ENCODE measurements at regions of chr10 and their contacts with region 1.

Region 1: DNA sequence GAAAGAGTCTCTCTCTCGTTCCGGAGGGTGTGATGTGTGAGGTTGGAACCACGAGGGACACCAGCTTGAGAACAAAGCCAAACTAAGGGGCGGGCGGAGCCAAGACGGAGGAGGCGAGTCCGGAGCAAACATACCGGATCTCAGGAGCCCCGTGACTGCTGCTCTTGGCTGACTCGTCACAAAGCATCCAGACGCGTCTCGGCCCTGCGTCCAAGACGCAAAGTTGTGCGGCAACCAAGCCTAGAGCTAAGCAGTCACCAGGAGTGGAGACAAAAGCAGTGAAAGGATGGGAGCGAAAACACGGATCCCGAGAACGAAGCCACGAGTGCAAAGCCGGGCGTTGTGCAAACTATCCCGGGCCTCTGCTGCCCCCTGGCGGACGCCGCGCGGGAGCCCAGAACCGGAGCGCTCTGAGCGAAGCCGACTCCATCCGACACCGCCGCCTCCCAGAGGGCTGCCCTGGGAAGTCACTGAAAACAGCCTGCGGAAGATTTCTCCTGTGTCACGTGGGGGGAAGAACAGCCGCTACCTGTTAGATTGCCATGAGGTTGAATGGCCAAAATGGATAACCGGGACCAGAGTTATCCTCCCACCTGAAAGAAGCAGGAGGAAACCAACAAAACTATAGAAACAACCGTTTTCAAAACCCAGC is 46.4 kb upstream of the TMEM72 start:
- DNase-seq: peak; percentile 70 to 79 (median 75)
- H3K4me3 ChIP-seq: peak overlapping the region; percentile 43 to 72
- H3K4me3 Mint-ChIP-seq: peak overlapping the region; percentile 88 to 94 (median 91)
- H3K27ac ChIP-seq: no peak overlapping the region
- H3K27ac Mint-ChIP-seq: peak overlapping the region in 1 of 7 donors; percentile 38
- H3K4me1 ChIP-seq: peaks cover 14% of the 10 kb centered on the region
- H3K4me1 Mint-ChIP-seq: peaks cover 5 to 18% (median 9%) of the 10 kb centered on the region in 4 donors
- H3K27me3 ChIP-seq: peaks cover 9% of the 10 kb centered on the region
- H3K27me3 Mint-ChIP-seq: peaks cover 32 to 37% of the 10 kb centered on the region in 2 donors

Region 2: DNA sequence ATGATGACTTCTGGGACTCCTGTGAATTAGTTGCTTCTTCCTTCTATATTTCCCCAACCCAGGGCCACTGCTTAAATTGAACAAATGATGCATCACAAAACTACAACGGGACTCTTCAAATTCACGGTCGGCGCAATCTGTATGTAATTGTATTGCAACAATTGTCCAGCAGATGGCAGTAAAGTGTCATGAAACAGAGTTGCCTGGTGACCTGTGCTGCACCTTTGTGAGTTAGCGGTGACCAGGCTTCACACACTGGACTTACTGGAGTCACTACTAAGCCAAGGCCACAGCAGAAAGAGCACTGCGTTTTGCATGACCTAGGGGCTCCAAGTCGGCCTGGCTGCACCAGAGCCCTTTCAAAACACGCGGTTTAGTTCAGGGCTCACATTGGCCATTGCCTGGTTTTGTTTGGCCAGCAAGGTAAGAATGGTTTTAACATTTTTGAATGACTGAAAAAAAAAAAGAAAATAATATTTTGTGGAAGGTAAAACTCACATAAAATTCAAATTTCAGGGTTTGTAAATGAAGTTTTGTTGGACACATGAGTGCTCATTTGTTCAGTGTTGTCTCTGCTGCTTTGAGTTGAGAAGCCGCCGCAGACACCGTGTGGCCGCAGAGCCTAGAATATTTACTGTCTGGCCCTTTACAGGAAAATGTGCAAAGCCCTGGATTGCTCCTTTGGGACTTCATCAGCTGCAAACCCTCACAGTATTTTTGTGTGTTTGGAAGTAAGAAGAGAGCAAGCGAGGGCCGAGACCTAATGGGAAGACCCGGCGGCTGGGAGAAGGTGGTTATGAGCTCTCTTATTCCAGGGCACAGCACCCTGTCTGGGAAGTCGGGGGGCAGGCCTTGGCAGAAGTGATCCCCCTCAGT is 1192.9 kb before region 1 on chr10:
- CTCF ChIA-PET with region 1: interaction called, 27 read pairs
- POLR2A ChIA-PET with region 1: no interaction called
- intact Hi-C with region 1: loop called (anchors 1 kb)
- DNase-seq: peak in 4 of 5 donors; percentile 49 to 65 (median 54)
- H3K4me3 ChIP-seq: no peak overlapping the region
- H3K4me3 Mint-ChIP-seq: no peak overlapping the region
- H3K27ac ChIP-seq: no peak overlapping the region
- H3K27ac Mint-ChIP-seq: no peak overlapping the region
- H3K4me1 ChIP-seq: no peaks in the 10 kb centered on the region
- H3K4me1 Mint-ChIP-seq: peaks cover 0 to 7% (median 2%) of the 10 kb centered on the region in 4 donors
- H3K27me3 ChIP-seq: peaks cover 10% of the 10 kb centered on the region
- H3K27me3 Mint-ChIP-seq: peaks cover 27 to 32% of the 10 kb centered on the region in 2 donors

Region 3: DNA sequence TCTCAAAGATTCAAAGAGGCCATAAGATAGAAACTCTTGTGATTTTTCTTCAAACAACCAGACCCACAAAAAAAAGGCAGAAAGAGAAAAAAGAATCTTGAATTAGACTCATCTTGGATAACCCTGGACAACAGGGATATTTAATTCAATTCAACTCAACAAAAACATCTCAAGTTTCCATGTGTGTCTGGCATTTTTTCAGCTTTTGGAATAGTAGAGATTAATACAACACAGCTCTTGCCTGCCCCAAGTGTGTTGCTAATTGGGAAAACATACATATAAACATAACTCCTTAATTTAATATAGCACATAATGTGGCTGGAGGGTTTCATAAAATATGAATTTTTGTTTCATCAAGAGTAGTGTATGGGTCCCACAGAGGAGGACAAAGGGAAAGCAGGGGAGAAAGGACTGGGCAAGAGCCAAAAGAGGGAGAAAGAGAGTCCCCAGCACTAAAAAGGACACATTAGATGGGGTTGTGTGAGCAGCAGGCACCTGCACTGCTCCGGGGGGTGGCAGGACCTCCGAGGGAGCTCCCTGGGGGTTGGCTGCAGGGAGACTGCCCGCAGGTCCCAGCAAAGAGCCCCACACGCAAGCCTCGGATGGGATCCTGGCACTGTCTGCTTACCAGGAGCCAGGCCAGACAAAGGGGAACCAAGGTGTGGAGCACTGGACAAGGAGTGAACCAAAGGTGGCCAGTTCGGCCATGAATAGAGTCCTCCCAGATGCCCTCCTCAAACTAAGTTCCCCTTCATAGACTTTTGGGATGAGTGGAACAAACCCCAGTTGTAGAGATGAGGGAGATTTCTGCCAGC is 19.2 kb before region 1 on chr10:
- CTCF ChIA-PET with region 1: interaction called, 24 read pairs
- POLR2A ChIA-PET with region 1: no interaction called
- intact Hi-C with region 1: no loop called
- DNase-seq: no peak
- H3K4me3 ChIP-seq: no peak overlapping the region
- H3K4me3 Mint-ChIP-seq: no peak overlapping the region
- H3K27ac ChIP-seq: no peak overlapping the region
- H3K27ac Mint-ChIP-seq: no peak overlapping the region
- H3K4me1 ChIP-seq: no peaks in the 10 kb centered on the region
- H3K4me1 Mint-ChIP-seq: no peaks in the 10 kb centered on the region
- H3K27me3 ChIP-seq: no peaks in the 10 kb centered on the region
- H3K27me3 Mint-ChIP-seq: peaks cover 9 to 11% of the 10 kb centered on the region in 2 donors

Region 4: GRCh38 chr10:44878706-44879530 is 14.2 kb after region 1 on chr10:
- CTCF ChIA-PET with region 1: interaction called, 70 read pairs
- POLR2A ChIA-PET with region 1: interaction called, 3 read pairs
- intact Hi-C with region 1: loop called (anchors 2 kb)
- DNase-seq: peak; percentile 63 to 75 (median 68)
- H3K4me3 ChIP-seq: peak overlapping the region; percentile 39 to 46
- H3K4me3 Mint-ChIP-seq: peak overlapping the region; percentile 86 to 94 (median 90)
- H3K27ac ChIP-seq: no peak overlapping the region
- H3K27ac Mint-ChIP-seq: peak overlapping the region in 5 of 7 donors; percentile 47 to 86 (median 72)
- H3K4me1 ChIP-seq: no peaks in the 10 kb centered on the region
- H3K4me1 Mint-ChIP-seq: peaks cover 7 to 17% (median 9%) of the 10 kb centered on the region in 4 donors
- H3K27me3 ChIP-seq: no peaks in the 10 kb centered on the region
- H3K27me3 Mint-ChIP-seq: peaks cover 2 to 7% of the 10 kb centered on the region in 2 donors

Region 5: GRCh38 chr10:44974628-44975431 is 110.1 kb after region 1 on chr10:
- CTCF ChIA-PET with region 1: no interaction called
- POLR2A ChIA-PET with region 1: no interaction called
- intact Hi-C with region 1: loop called (anchors 10 kb)
- DNase-seq: peak in 4 of 5 donors; percentile 60 to 75 (median 65)
- H3K4me3 ChIP-seq: peak overlapping the region; percentile 60 to 61
- H3K4me3 Mint-ChIP-seq: peak overlapping the region; percentile 61 to 80 (median 74)
- H3K27ac ChIP-seq: no peak overlapping the region
- H3K27ac Mint-ChIP-seq: peak overlapping the region in 4 of 7 donors; percentile 16 to 77 (median 33)
- H3K4me1 ChIP-seq: peaks cover 17% of the 10 kb centered on the region
- H3K4me1 Mint-ChIP-seq: peaks cover 0 to 9% (median 3%) of the 10 kb centered on the region in 4 donors
- H3K27me3 ChIP-seq: no peaks in the 10 kb centered on the region
- H3K27me3 Mint-ChIP-seq: no peaks in the 10 kb centered on the region